Breast epithelium (tissue), 4 donors: ENCODE measurements at regions of chr1 and their contacts with region 1.

Region 1: DNA sequence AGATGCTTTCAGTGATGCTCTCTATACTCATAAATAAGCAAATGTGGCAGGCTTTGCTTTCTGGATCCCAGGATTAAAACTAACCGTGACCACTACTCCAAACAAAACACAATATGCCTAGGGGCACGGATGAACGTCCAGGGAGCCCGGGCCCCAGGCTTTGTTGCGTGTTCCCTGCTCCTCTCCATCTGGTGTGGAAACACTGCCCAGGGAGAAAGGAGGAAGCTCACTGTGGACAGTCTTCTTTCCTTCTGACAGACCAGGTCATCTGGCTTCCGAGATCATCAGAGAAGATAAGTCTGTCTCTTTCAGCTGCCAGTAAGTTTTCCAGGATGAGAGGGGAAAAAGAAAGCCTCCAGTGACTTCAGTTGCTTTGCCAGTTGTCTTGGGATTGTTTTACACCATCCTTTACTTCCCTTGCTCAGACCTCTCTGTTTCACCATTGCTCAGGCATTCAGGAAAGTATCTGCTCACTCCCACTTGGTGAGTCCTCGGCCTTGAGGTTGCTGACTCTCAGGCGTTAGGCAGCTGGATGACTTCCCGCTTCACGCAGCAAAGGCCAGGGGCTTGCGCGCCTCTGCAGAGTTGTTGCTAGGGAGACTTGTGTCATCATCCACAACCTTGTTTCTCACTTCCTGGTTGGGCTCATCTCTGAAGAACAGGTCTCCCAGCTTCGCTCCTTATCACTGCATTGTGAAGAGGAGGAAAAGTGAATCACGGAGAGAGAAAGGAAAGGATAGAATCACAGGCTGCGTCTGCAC is 20.6 kb upstream of the PGD start:
- DNase-seq: peak in 1 of 2 donors; percentile 62
- H3K4me3 ChIP-seq: no peak overlapping the region
- H3K27ac ChIP-seq: peak overlapping the region; percentile 75 to 78
- H3K4me1 ChIP-seq: no peaks in the 10 kb centered on the region
- H3K27me3 ChIP-seq: no peaks in the 10 kb centered on the region
- CTCF ChIP-seq: no peak
- POLR2A ChIP-seq: no peak

Region 2: DNA sequence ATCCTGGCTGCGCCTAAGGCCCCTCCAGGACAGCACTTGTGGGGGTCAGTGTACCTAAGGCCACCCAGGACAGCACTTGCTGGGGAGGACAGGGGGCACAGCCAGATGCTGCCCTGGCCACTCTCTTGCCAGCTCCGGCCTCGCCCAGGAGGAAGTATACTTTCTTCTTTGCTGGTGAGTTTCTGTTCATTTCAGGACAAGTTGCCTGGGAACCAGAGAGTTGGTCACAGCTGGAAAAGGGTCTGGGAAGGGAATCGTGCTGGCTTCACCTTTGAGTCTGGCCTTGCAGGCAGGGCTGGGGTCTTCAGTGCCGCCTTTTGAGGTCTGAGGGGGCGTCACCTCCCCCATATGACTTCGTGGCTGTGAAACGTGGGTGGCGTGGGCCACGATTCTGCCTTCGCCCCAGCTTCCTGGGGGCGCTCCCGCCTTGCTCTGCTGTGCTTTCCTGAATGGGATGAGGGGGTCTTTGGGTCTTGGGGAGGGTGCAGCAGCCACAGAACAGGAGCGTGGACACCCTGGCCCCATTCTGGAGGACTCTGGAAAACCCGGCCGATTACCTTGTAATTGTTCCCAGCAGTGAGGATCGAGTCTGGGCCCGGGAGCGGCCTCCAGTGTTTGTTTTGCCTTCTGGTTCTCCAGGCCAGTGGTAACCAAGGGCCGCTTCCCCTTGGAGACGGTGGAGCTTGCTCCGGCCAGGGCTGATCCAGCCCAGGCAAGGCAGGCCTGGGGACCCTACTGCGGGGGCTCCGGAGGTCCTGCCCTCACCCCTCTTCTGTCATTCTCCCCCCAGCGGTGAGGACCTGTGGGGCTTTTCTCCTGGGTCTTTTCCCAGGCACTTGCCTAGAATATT is 1039.6 kb before region 1 on chr1:
- intact Hi-C with region 1: no loop called
- DNase-seq: peak; percentile 57 to 80
- H3K4me3 ChIP-seq: peak overlapping the region in 1 of 3 donors; percentile 41
- H3K27ac ChIP-seq: peak overlapping the region; percentile 70 to 88
- H3K4me1 ChIP-seq: peaks cover 10 to 11% of the 10 kb centered on the region in 2 donors
- H3K27me3 ChIP-seq: no peaks in the 10 kb centered on the region
- CTCF ChIP-seq: no peak
- POLR2A ChIP-seq: no peak

Region 3: DNA sequence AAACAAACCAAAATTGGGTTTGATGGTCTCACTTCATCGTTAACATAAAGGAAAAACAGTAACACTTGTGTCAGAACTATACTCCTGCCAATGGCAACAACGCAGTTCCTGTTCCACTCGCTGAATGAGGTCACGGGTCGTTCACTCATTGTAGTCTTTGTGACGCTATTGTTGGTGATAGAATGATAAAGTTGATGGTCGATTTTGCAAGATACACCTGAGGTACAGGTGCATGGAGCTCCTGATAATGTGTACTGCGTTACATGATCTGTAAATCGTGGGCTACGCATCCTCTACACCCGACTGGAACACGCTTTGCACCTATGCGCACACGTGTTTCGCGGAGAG is 51.6 kb after region 1 on chr1:
- intact Hi-C with region 1: loop called (anchors 10 kb)
- DNase-seq: no peak
- H3K4me3 ChIP-seq: peak overlapping the region; percentile 65 to 79 (median 72)
- H3K27ac ChIP-seq: peak overlapping the region; percentile 50 to 70
- H3K4me1 ChIP-seq: peaks cover 0 to 5% of the 10 kb centered on the region in 2 donors
- H3K27me3 ChIP-seq: no peaks in the 10 kb centered on the region
- CTCF ChIP-seq: no peak
- POLR2A ChIP-seq: no peak

Region 4: GRCh38 chr1:10519016-10519417 is 140.8 kb after region 1 on chr1:
- intact Hi-C with region 1: no loop called
- DNase-seq: no peak
- H3K4me3 ChIP-seq: no peak overlapping the region
- H3K27ac ChIP-seq: peak overlapping the region; percentile 38 to 57
- H3K4me1 ChIP-seq: no peaks in the 10 kb centered on the region
- H3K27me3 ChIP-seq: no peaks in the 10 kb centered on the region
- CTCF ChIP-seq: no peak
- POLR2A ChIP-seq: no peak

Region 5: DNA sequence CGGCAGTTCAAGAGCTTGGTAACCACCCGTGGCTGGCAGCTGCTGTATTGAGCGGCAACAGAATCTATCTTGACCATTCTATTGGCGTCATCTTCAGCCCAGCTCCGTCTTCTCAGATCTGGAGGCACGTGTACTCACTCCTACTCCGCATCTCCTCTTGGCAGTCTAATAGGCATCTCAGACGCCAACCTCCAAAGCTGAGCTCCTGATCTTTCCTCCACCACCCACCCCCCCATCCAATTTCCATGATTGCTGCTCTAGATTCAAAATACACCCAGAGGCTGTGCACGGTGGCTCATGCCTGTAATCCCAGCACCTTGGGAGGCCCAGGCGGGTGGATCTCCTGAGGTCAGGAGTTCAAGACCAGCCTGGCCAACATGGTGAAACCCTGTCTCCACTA is 502.8 kb after region 1 on chr1:
- intact Hi-C with region 1: no loop called
- DNase-seq: no peak
- H3K4me3 ChIP-seq: no peak overlapping the region
- H3K27ac ChIP-seq: no peak overlapping the region
- H3K4me1 ChIP-seq: no peaks in the 10 kb centered on the region
- H3K27me3 ChIP-seq: no peaks in the 10 kb centered on the region
- CTCF ChIP-seq: no peak
- POLR2A ChIP-seq: no peak